A673 (cell line): ENCODE measurements at regions of chr11 and their contacts with region 1.

Region 1: DNA sequence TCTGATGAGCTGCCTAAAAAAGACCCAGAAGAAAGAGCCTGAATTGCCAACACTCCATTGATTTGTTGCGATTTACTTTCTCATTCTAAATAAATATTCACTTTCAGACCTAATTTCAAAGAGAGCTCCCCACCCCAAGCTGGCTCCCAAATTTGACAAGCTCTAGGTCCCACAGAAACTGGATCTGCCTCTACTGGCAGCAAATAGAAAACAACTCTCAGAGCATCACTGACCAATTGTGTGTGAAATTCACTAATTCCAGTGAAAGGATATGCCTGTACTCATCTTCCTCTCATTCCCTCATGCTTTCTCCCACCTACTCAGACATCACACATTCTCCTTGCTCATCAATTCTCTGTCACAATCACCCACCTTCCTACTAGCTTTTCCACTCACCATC is 249.1 kb downstream of the DCDC1 start:
- DNase-seq: no peak
- H3K4me3 ChIP-seq: no peak overlapping the region
- H3K27ac ChIP-seq: no peak overlapping the region
- H3K4me1 ChIP-seq: no peaks in the 10 kb centered on the region
- H3K27me3 ChIP-seq: no peaks in the 10 kb centered on the region
- CTCF ChIP-seq: no peak

Region 2: GRCh38 chr11:31069447-31070205 is 50.8 kb before region 1 on chr11:
- CTCF ChIA-PET with region 1: no interaction called
- POLR2A ChIA-PET with region 1: no interaction called
- intact Hi-C with region 1: loop called (anchors 5 kb)
- DNase-seq: no peak
- H3K4me3 ChIP-seq: no peak overlapping the region
- H3K27ac ChIP-seq: no peak overlapping the region
- H3K4me1 ChIP-seq: no peaks in the 10 kb centered on the region
- H3K27me3 ChIP-seq: peaks cover 7% of the 10 kb centered on the region
- CTCF ChIP-seq: no peak